Naive thymus-derived CD4-positive, alpha-beta T cell (primary cell): ENCODE measurements at regions of chr21 and their contacts with region 1.

Region 1: GRCh38 chr21:34129039-34129891 is 55.9 kb downstream of the MRPS6 start:
- DNase-seq: peak; percentile 9 to 86 (median 78)
- ATAC-seq: peak; percentile 92
- H3K4me3 ChIP-seq: peak overlapping the region; percentile 22
- H3K4me3 Mint-ChIP-seq: peak overlapping the region; percentile 64 to 82 (median 76)
- H3K27ac ChIP-seq: peak overlapping the region; percentile 64
- H3K27ac Mint-ChIP-seq: peak overlapping the region; percentile 72 to 97 (median 90)
- H3K4me1 ChIP-seq: peaks cover 4 to 67% of the 10 kb centered on the region in 2 donors
- H3K4me1 Mint-ChIP-seq: peaks cover 69 to 99% (median 95%) of the 10 kb centered on the region in 7 donors
- H3K27me3 ChIP-seq: no peaks in the 10 kb centered on the region
- H3K27me3 Mint-ChIP-seq: no peaks in the 10 kb centered on the region

Region 2: GRCh38 chr21:33976082-33977016 is 152.9 kb before region 1 on chr21:
- CTCF ChIA-PET with region 1: no interaction called
- POLR2A ChIA-PET with region 1: no interaction called
- intact Hi-C with region 1: loop called in 1 of 2 experiments (anchors 2 kb)
- DNase-seq: peak in 8 of 9 donors; percentile 23 to 62 (median 32)
- ATAC-seq: peak; percentile 62
- H3K4me3 ChIP-seq: peak overlapping the region; percentile 18
- H3K4me3 Mint-ChIP-seq: peak overlapping the region; percentile 43 to 78 (median 72)
- H3K27ac ChIP-seq: peak overlapping the region; percentile 64
- H3K27ac Mint-ChIP-seq: peak overlapping the region; percentile 79 to 99 (median 86)
- H3K4me1 ChIP-seq: peaks cover 28 to 32% of the 10 kb centered on the region in 2 donors
- H3K4me1 Mint-ChIP-seq: peaks cover 36 to 73% (median 53%) of the 10 kb centered on the region in 7 donors
- H3K27me3 ChIP-seq: no peaks in the 10 kb centered on the region
- H3K27me3 Mint-ChIP-seq: no peaks in the 10 kb centered on the region

Region 3: GRCh38 chr21:34091607-34092006 is 37.7 kb before region 1 on chr21:
- CTCF ChIA-PET with region 1: interaction called, 4 read pairs
- POLR2A ChIA-PET with region 1: no interaction called
- intact Hi-C with region 1: loop called in 1 of 2 experiments (anchors 5 kb)
- DNase-seq: no peak
- ATAC-seq: no peak
- H3K4me3 ChIP-seq: no peak overlapping the region
- H3K4me3 Mint-ChIP-seq: peak overlapping the region in 5 of 10 donors; percentile 17 to 54 (median 39)
- H3K27ac ChIP-seq: no peak overlapping the region
- H3K27ac Mint-ChIP-seq: peak overlapping the region in 5 of 9 donors; percentile 2 to 55 (median 38)
- H3K4me1 ChIP-seq: peaks cover 17 to 41% of the 10 kb centered on the region in 2 donors
- H3K4me1 Mint-ChIP-seq: peaks cover 1 to 74% (median 56%) of the 10 kb centered on the region in 7 donors
- H3K27me3 ChIP-seq: no peaks in the 10 kb centered on the region
- H3K27me3 Mint-ChIP-seq: no peaks in the 10 kb centered on the region

Region 4: GRCh38 chr21:34154878-34155277 is 25.6 kb after region 1 on chr21:
- CTCF ChIA-PET with region 1: no interaction called
- POLR2A ChIA-PET with region 1: no interaction called
- intact Hi-C with region 1: loop called in 1 of 2 experiments (anchors 1 kb)
- DNase-seq: peak in 6 of 9 donors; percentile 18 to 59 (median 32)
- ATAC-seq: peak; percentile 32
- H3K4me3 ChIP-seq: no peak overlapping the region
- H3K4me3 Mint-ChIP-seq: peak overlapping the region in 1 of 10 donors; percentile 43
- H3K27ac ChIP-seq: no peak overlapping the region
- H3K27ac Mint-ChIP-seq: peak overlapping the region in 5 of 9 donors; percentile 46 to 91 (median 81)
- H3K4me1 ChIP-seq: no peaks in the 10 kb centered on the region
- H3K4me1 Mint-ChIP-seq: peaks cover 10 to 49% (median 15%) of the 10 kb centered on the region in 7 donors
- H3K27me3 ChIP-seq: no peaks in the 10 kb centered on the region
- H3K27me3 Mint-ChIP-seq: no peaks in the 10 kb centered on the region

Region 5: GRCh38 chr21:34202553-34203372 is 73.5 kb after region 1 on chr21:
- CTCF ChIA-PET with region 1: interaction called, 6 read pairs
- POLR2A ChIA-PET with region 1: interaction called, 3 read pairs
- intact Hi-C with region 1: loop called (anchors 1 kb)
- DNase-seq: no peak
- ATAC-seq: no peak
- H3K4me3 ChIP-seq: peak overlapping the region; percentile 47
- H3K4me3 Mint-ChIP-seq: peak overlapping the region; percentile 70 to 92 (median 86)
- H3K27ac ChIP-seq: no peak overlapping the region
- H3K27ac Mint-ChIP-seq: peak overlapping the region in 8 of 9 donors; percentile 24 to 87 (median 63)
- H3K4me1 ChIP-seq: peaks cover 8 to 31% of the 10 kb centered on the region in 2 donors
- H3K4me1 Mint-ChIP-seq: peaks cover 28 to 64% (median 56%) of the 10 kb centered on the region in 7 donors
- H3K27me3 ChIP-seq: no peaks in the 10 kb centered on the region
- H3K27me3 Mint-ChIP-seq: no peaks in the 10 kb centered on the region

Region 6: DNA sequence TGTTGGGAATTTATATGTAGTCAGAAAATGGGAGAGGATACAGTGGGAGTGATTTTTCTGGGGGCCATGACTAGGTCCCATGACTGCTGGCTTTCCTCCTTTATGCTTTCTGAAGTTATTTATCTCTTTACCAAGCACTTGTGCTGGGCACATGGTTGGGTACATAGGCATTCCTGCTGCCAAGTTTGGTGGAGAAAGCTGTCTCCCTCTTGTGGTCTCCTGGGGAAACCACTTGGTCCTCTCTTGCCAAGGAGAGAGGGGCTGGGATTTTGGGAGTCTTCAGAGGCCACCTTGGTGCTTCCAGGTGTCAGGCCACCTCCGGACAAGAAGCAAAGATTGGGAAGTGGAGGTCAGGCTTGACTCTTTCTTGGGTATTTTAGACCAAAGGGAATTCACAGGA is 114.3 kb after region 1 on chr21:
- CTCF ChIA-PET with region 1: no interaction called
- POLR2A ChIA-PET with region 1: no interaction called
- intact Hi-C with region 1: loop called (anchors 1 kb)
- DNase-seq: peak in 5 of 9 donors; percentile 1 to 25 (median 3)
- ATAC-seq: no peak
- H3K4me3 ChIP-seq: no peak overlapping the region
- H3K4me3 Mint-ChIP-seq: no peak overlapping the region
- H3K27ac ChIP-seq: no peak overlapping the region
- H3K27ac Mint-ChIP-seq: peak overlapping the region in 1 of 9 donors; percentile 24
- H3K4me1 ChIP-seq: no peaks in the 10 kb centered on the region
- H3K4me1 Mint-ChIP-seq: peaks cover 0 to 6% (median 0%) of the 10 kb centered on the region in 7 donors
- H3K27me3 ChIP-seq: no peaks in the 10 kb centered on the region
- H3K27me3 Mint-ChIP-seq: peaks cover 0 to 4% (median 0%) of the 10 kb centered on the region in 5 donors

Region 7: GRCh38 chr21:34351786-34352241 is 222.5 kb after region 1 on chr21:
- CTCF ChIA-PET with region 1: interaction called, 4 read pairs
- POLR2A ChIA-PET with region 1: no interaction called
- intact Hi-C with region 1: loop called (anchors 1 kb)
- DNase-seq: peak in 2 of 9 donors; percentile 16 to 23
- ATAC-seq: peak; percentile 69
- H3K4me3 ChIP-seq: no peak overlapping the region
- H3K4me3 Mint-ChIP-seq: no peak overlapping the region
- H3K27ac ChIP-seq: no peak overlapping the region
- H3K27ac Mint-ChIP-seq: no peak overlapping the region
- H3K4me1 ChIP-seq: no peaks in the 10 kb centered on the region
- H3K4me1 Mint-ChIP-seq: peaks cover 0 to 11% (median 8%) of the 10 kb centered on the region in 7 donors
- H3K27me3 ChIP-seq: no peaks in the 10 kb centered on the region
- H3K27me3 Mint-ChIP-seq: peaks cover 10 to 25% (median 22%) of the 10 kb centered on the region in 5 donors

Region 8: GRCh38 chr21:34933609-34934335 is 804.5 kb after region 1 on chr21:
- CTCF ChIA-PET with region 1: no interaction called
- POLR2A ChIA-PET with region 1: no interaction called
- intact Hi-C with region 1: no loop called
- DNase-seq: peak in 7 of 9 donors; percentile 47 to 83 (median 72)
- ATAC-seq: peak; percentile 94
- H3K4me3 ChIP-seq: peak overlapping the region; percentile 56
- H3K4me3 Mint-ChIP-seq: peak overlapping the region; percentile 39 to 88 (median 78)
- H3K27ac ChIP-seq: peak overlapping the region; percentile 81
- H3K27ac Mint-ChIP-seq: peak overlapping the region; percentile 83 to 97 (median 94)
- H3K4me1 ChIP-seq: peaks cover 52 to 68% of the 10 kb centered on the region in 2 donors
- H3K4me1 Mint-ChIP-seq: peaks cover 70 to 93% (median 89%) of the 10 kb centered on the region in 7 donors
- H3K27me3 ChIP-seq: no peaks in the 10 kb centered on the region
- H3K27me3 Mint-ChIP-seq: no peaks in the 10 kb centered on the region